Ascending aorta (tissue), 2 donors: ENCODE measurements at regions of chr13 and their contacts with region 1.

Region 1: DNA sequence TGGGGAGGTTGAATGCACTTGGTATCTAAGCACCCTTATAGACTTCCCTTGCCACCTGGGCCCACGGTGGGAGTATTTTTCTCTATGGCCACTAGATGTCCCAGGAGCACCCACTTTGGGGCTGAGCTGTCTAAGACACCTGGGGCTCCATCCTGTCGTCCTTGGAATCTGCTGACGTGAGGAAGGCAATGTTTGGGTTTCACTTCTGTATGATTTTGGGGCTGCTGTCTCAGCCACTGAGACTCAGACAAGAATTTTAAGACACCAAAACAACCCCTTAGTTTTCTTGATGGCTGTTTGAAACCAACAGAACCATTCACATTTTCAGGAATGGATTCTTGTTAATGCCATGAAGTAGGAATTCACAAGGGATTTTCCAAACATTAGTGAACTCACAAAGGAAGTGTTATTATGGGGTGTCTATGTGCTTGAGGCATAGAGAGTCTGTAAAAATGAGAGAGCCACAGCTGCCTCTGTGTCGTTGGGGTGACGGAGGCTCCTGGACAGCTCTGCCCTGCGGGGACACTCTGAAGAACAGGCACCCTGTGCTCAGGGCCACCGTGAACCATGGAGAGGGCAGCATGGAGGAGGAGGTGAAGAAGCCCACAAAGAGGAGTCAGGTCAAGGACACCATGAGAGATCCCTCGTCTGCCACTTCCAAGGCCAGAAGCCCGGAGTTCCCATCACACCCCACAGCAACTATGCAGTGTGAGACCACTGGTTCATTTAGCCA is 106.8 kb upstream of the SPATA13 start:
- DNase-seq: no peak
- H3K4me3 ChIP-seq: peak overlapping the region in 1 of 2 donors; percentile 49
- H3K27ac ChIP-seq: peak overlapping the region; percentile 58 to 69
- H3K4me1 ChIP-seq: peaks cover 0 to 20% of the 10 kb centered on the region in 2 donors
- H3K27me3 ChIP-seq: no peaks in the 10 kb centered on the region
- CTCF ChIP-seq: peak; percentile 45 to 60 (median 51)

Region 2: GRCh38 chr13:23980160-23980551 is 73.5 kb before region 1 on chr13:
- intact Hi-C with region 1: loop called (anchors 2 kb)
- DNase-seq: peak; percentile 50 to 89
- H3K4me3 ChIP-seq: peak overlapping the region; percentile 62 to 65
- H3K27ac ChIP-seq: no peak overlapping the region
- H3K4me1 ChIP-seq: no peaks in the 10 kb centered on the region
- H3K27me3 ChIP-seq: no peaks in the 10 kb centered on the region
- CTCF ChIP-seq: no peak

Region 3: DNA sequence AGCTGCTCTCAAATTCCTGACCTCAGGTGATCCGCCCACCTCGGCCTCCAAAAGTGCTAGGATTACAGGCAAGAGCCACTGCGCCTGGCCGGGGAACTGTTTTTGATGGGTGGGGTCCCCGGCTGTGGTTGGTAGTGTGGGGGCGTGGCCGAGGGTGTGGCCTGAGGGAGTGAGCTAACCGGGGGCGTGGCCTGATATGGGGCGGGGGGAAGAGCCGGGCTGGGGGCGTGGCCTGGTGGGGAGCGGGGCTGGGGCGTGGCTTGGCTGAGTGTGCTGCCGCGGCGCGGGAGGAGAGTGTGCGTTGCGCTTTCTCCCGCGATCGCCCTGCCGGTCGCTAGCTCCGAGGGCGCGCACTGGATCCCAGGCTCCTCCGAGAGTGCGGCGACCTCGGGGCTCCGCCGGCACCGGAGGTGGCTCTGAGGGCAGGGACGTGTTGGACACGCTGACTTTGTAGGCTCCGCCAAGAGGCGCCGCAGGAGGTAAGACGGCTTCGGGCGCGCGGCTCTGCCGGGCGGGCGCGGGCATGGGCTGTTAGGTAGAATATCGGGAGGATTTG is 106.8 kb after region 1 on chr13 and contains the start of gene SPATA13:
- intact Hi-C with region 1: loop called (anchors 2 kb)
- DNase-seq: peak; percentile 63 to 94
- H3K4me3 ChIP-seq: peak within 1 kb of the TSS; percentile 61 to 89
- H3K27ac ChIP-seq: peak within 1 kb of the TSS in 1 of 2 donors; percentile 41
- H3K4me1 ChIP-seq: no peaks in the 10 kb centered on the region
- H3K27me3 ChIP-seq: no peaks in the 10 kb centered on the region
- CTCF ChIP-seq: no peak
- total RNA-seq, gene SPATA13: 38.2 TPM

Region 4: GRCh38 chr13:24540236-24541126 is 486.8 kb after region 1 on chr13:
- intact Hi-C with region 1: no loop called
- DNase-seq: no peak
- H3K4me3 ChIP-seq: no peak overlapping the region
- H3K27ac ChIP-seq: no peak overlapping the region
- H3K4me1 ChIP-seq: no peaks in the 10 kb centered on the region
- H3K27me3 ChIP-seq: no peaks in the 10 kb centered on the region
- CTCF ChIP-seq: no peak